ENCODE measurements at regions of chr22 and their contacts with region 1.

Region 1: GRCh38 chr22:40177738-40178416 is at the start of gene TNRC6B:
- DNase-seq: peak; percentile 96
- H3K4me3 ChIP-seq: peak within 1 kb of the TSS; percentile 62 to 99 (median 93)
- H3K27ac ChIP-seq: peak within 1 kb of the TSS; percentile 90
- H3K4me1 ChIP-seq: peaks cover 37% of the 10 kb centered on the region
- H3K27me3 ChIP-seq: no peaks in the 10 kb centered on the region
- CTCF ChIP-seq: no peak
- POLR2A ChIP-seq: peak; percentile 99
- total RNA-seq, gene TNRC6B: 33.3 and 37.2 TPM in 2 replicates

Region 2: DNA sequence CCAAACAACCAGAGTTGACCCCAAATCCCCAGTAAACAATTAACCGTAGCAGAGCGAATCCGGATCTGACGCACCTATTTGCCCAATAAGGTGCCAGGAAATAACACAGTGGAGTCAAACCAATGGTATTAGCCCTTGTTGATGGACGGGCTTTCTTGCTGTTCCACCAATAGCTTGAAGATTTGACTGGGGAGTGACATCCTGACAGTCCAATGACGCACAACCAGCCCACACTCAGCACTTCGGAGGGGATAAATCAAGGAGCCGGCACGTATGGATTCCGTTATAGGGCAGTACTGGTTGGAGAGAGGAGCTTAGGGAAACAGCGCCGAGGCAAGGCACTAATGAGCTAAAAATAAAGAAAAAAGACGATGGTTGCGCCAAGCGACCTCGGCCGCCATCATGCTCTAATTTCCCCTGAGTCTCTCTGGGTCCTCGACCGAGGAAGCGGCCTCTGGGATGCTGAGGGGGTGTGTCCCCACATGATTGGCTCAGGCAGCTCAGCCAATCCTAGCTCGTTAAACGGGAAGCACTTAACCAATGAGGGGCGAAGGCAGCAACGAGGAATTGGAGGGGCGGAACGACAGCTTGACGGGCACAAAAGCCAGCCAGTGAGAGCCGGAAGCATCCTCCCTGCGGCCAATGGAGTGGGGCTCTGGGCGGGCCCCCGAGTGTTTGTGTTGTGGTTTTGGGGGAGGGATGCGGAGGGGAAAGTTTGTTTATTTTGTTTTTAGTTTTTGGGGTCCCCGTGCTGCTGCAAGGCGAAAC is 133.6 kb before region 1 on chr22:
- CTCF ChIA-PET with region 1: interaction called, 8 read pairs
- POLR2A ChIA-PET with region 1: interaction called, 9 read pairs
- dilution Hi-C with region 1: no loop called
- intact Hi-C with region 1: loop called (anchors 1 kb)
- DNase-seq: peak; percentile 99
- H3K4me3 ChIP-seq: peak overlapping the region; percentile 48 to 95 (median 68)
- H3K27ac ChIP-seq: peak overlapping the region; percentile 87
- H3K4me1 ChIP-seq: peaks cover 19% of the 10 kb centered on the region
- H3K27me3 ChIP-seq: peaks cover 0 to 16% of the 10 kb centered on the region in 2 experiments
- CTCF ChIP-seq: no peak
- POLR2A ChIP-seq: no peak

Region 3: GRCh38 chr22:40250608-40251007 is 72.7 kb after region 1 on chr22:
- CTCF ChIA-PET with region 1: no interaction called
- POLR2A ChIA-PET with region 1: no interaction called
- dilution Hi-C with region 1: no loop called
- intact Hi-C with region 1: no loop called
- DNase-seq: no peak
- H3K4me3 ChIP-seq: no peak overlapping the region
- H3K27ac ChIP-seq: no peak overlapping the region
- H3K4me1 ChIP-seq: no peaks in the 10 kb centered on the region
- H3K27me3 ChIP-seq: no peaks in the 10 kb centered on the region
- CTCF ChIP-seq: no peak
- POLR2A ChIP-seq: no peak

Region 4: DNA sequence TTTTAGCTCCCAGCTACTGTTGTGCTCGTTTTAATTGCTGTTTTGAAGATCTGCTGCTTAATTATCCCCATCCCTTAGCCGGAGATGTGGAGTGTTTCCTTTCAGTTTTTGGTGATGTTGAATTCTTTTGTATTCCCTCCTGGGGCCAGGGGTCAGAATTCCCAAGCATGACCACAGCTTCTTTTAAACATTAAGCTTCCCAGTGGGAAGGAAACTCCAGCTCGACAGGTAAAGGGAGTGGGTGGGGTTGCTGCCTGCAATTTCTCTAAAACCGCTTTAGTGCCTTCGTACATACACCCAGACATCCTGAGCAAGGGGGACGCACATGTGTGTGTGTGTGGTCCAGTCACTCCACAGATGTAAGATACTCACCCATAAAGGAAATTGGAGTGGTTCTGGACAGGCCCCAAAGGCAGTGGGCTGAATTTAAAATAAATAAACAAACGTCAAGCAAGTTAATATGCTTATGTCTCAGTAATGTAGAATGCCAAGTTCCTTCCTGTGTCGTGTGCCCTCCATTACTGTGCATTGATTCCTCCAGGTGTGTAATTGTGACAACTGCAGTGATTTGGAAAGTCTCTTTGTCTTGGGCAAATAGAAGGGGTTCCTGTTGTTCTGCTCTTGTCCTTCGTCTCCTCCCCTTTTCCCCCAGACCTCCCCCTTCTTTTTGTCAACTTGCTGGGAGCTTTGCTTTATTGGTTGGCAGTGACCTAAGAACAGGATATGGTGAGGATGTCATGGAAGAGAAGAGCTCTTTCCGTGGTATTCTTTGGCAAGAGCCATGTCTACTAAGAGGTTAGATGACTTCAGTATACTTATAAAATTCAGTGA is 149.2 kb after region 1 on chr22:
- CTCF ChIA-PET with region 1: interaction called, 3 read pairs
- POLR2A ChIA-PET with region 1: interaction called, 6 read pairs
- dilution Hi-C with region 1: no loop called
- intact Hi-C with region 1: loop called (anchors 5 kb)
- DNase-seq: peak; percentile 75
- H3K4me3 ChIP-seq: no peak overlapping the region
- H3K27ac ChIP-seq: peak overlapping the region; percentile 54
- H3K4me1 ChIP-seq: peaks cover 19% of the 10 kb centered on the region
- H3K27me3 ChIP-seq: no peaks in the 10 kb centered on the region
- CTCF ChIP-seq: no peak
- POLR2A ChIP-seq: no peak

Region 5: DNA sequence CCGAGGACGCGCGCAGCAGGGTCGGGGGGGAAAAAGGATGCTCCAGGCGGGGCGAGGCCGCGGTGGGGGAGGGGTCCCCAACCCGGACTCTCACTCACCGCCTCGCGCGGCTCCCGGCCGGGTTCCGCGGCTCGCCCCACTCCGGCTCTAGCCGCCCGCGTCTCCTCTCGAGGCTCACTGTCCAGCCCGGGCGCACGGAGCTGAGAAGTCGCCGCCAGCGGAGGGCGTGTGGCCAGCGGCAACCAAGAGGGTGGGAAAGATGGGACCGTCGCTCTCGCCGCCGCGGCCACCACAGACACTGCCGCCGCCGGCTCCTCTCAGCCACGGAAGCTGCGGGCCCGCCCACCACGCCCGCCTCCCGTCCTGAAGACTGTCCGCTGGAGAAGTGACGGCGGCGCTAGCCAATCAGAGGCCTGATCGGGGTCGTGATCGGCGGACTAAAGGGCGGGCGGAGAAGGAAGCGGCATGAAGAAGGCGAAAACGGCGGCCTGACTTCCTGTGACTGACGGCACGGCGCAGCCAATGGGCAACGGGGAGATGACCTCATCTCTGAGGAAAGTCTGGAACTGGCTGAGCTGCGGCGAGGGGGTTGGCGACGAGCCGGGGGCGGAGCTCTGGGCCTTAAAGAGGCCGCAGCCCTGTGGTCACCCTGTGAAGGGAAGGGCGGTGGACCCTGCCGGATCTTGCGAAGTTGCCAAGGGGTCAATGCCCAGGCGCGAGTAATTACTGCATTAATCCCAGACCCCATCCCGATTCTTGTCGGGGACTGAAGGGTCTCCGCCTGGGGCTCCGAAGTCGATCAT is 458.7 kb after region 1 on chr22 and contains the start of gene MRTFA:
- CTCF ChIA-PET with region 1: no interaction called
- POLR2A ChIA-PET with region 1: no interaction called
- dilution Hi-C with region 1: no loop called
- intact Hi-C with region 1: loop called (anchors 5 kb)
- DNase-seq: peak; percentile 100
- H3K4me3 ChIP-seq: peak within 1 kb of the TSS; percentile 72 to 88 (median 87)
- H3K27ac ChIP-seq: peak within 1 kb of the TSS; percentile 69
- H3K4me1 ChIP-seq: peaks cover 21% of the 10 kb centered on the region
- H3K27me3 ChIP-seq: no peaks in the 10 kb centered on the region
- CTCF ChIP-seq: no peak
- POLR2A ChIP-seq: peak; percentile 81
- total RNA-seq, gene MRTFA: 44.1 and 48.6 TPM in 2 replicates